Heart left ventricle (tissue), 16 donors: ENCODE measurements at regions of chr21 and their contacts with region 1.

Region 1: DNA sequence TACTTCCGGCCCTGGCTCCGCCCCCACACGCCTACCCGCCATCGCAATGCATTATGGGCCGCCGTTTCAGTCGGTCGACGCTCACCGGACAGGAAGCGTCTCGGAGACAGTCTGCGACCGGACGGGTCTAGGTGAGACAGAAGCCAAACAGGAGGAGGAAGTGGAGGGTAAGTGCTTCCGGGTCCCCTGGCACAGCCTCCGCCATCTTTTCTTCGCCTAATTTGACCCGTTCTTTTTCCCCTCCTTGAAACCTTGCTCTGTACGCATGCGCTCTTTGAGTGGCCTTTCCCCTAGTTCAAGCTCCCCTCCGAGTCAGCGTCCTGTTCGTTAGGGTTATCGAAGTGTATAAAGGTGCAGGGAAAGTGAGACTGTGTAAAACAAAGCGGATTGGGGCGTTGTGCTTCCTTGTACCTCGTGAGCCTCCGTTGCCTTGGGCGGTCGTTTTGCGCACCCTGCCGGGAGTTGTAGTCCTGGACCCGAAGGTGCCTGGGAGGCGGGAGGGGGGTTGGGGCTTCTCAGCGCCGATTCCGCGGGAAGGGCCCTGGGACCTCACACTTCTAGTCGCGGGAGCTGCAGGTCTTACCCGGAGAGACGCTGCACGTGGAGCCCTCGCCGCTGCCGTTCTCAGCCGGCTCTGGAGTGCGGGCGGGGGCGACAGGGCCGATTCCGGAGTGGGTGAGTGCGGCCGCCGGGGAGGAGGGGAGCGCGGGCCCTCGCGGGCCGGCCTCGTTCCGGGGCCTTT is at the starts of genes ATP5PF and GABPA:
- DNase-seq: peak; percentile 98
- ATAC-seq: peak; percentile 93 to 97 (median 96)
- H3K4me3 ChIP-seq: peak within 1 kb of the TSS; percentile 69 to 98 (median 92)
- H3K27ac ChIP-seq: peak within 1 kb of the TSS; percentile 93 to 100 (median 99)
- H3K4me1 ChIP-seq: peaks cover 6 to 62% (median 54%) of the 10 kb centered on the region in 12 donors
- H3K27me3 ChIP-seq: no peaks in the 10 kb centered on the region
- CTCF ChIP-seq: peak in 4 of 12 donors; percentile 11 to 43 (median 22)
- POLR2A ChIP-seq: no peak
- total RNA-seq, gene ATP5PF: 479 to 989 (median 653) TPM
- total RNA-seq, gene GABPA: 9.0 to 20.6 (median 15.6) TPM

Region 2: GRCh38 chr21:25561668-25562641 is 173.1 kb before region 1 on chr21:
- intact Hi-C with region 1: no loop called
- DNase-seq: peak; percentile 40 to 72 (median 47)
- ATAC-seq: peak in 3 of 4 donors; percentile 80 to 83 (median 83)
- H3K4me3 ChIP-seq: peak overlapping the region; percentile 30 to 78 (median 56)
- H3K27ac ChIP-seq: peak overlapping the region in 6 of 12 donors; percentile 16 to 78 (median 46)
- H3K4me1 ChIP-seq: peaks cover 0 to 57% (median 7%) of the 10 kb centered on the region in 12 donors
- H3K27me3 ChIP-seq: no peaks in the 10 kb centered on the region
- CTCF ChIP-seq: peak in 4 of 12 donors; percentile 15 to 38 (median 24)
- POLR2A ChIP-seq: no peak

Region 3: DNA sequence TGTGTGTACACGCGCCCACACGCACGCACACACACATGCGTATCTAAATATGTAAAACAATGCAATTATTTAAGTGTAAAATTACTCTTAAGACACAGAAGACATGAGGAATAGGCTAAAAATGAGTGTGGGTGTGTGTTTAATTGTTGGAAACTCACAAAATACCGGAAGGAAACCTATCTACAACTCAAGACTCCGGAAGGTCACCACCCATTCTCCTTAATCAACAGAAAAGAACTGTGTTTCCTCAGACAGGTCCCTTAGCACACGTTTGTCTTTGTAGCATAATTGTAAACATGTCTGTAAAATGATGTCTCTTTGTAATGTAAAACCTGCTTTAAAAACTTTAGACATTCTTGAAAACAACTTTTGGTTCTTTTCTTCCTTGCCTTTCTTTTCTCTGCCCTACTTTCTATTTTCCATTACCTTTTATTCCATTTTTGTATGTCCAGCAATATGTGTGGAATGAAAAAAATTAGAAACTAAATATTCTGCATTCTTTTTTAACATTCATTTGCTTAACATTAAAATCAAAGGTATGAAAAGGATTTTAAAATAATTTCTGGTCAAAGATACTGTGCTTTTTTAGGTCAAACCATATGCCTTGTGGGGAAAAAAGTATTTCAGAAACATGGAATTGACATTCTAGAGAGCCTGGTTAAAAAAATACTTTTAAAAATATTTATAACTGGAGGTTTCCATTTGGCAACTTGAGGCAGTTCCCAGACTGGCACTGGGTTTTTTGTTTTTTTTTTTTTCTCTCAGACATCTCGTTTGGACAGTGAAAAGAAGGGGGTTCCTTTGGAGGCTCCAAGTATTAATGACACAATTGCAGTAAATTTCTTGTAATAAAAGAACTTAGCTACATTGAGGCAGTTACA is 46.6 kb before region 1 on chr21:
- intact Hi-C with region 1: loop called in 1 of 10 experiments (anchors 5 kb)
- DNase-seq: no peak
- ATAC-seq: peak in 3 of 4 donors; percentile 59 to 85 (median 68)
- H3K4me3 ChIP-seq: no peak overlapping the region
- H3K27ac ChIP-seq: peak overlapping the region in 10 of 12 donors; percentile 35 to 79 (median 64)
- H3K4me1 ChIP-seq: peaks cover 0 to 42% (median 8%) of the 10 kb centered on the region in 12 donors
- H3K27me3 ChIP-seq: no peaks in the 10 kb centered on the region
- CTCF ChIP-seq: no peak
- POLR2A ChIP-seq: no peak

Region 4: DNA sequence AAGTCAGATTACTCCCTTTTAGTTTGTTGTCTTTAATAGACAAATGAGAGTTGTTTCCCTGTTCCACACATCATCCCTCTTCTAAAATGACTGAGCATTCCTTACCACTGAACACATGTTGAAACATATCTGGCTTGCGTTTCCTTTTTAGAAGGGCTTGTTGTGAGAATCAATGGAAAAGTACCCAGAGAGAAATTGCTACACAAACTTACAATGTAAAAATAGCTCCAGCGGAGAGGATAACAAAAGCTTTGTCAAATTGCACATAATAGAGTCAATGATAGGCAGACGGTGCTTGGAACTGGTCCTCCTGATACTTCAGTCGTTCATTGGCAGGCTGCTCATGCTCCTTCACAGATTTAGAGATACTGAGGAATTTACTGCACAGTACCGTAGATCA is 714.1 kb after region 1 on chr21:
- intact Hi-C with region 1: no loop called
- DNase-seq: no peak
- ATAC-seq: peak in 1 of 4 donors; percentile 77
- H3K4me3 ChIP-seq: no peak overlapping the region
- H3K27ac ChIP-seq: no peak overlapping the region
- H3K4me1 ChIP-seq: peaks cover 0 to 6% (median 0%) of the 10 kb centered on the region in 12 donors
- H3K27me3 ChIP-seq: no peaks in the 10 kb centered on the region
- CTCF ChIP-seq: no peak
- POLR2A ChIP-seq: no peak